ENCODE measurements at regions of chr14 and their contacts with region 1.

Region 1: GRCh38 chr14:102584871-102585869 is 7.3 kb upstream of the RCOR1 start:
- DNase-seq: peak; percentile 73 to 89
- H3K4me3 ChIP-seq: no peak overlapping the region
- H3K4me3 Mint-ChIP-seq: no peak overlapping the region
- H3K27ac Mint-ChIP-seq: peak overlapping the region; percentile 83
- H3K4me1 ChIP-seq: peaks cover 43% of the 10 kb centered on the region
- H3K4me1 Mint-ChIP-seq: peaks cover 29% of the 10 kb centered on the region
- H3K27me3 ChIP-seq: no peaks in the 10 kb centered on the region
- H3K27me3 Mint-ChIP-seq: no peaks in the 10 kb centered on the region
- CTCF ChIP-seq: no peak

Region 2: DNA sequence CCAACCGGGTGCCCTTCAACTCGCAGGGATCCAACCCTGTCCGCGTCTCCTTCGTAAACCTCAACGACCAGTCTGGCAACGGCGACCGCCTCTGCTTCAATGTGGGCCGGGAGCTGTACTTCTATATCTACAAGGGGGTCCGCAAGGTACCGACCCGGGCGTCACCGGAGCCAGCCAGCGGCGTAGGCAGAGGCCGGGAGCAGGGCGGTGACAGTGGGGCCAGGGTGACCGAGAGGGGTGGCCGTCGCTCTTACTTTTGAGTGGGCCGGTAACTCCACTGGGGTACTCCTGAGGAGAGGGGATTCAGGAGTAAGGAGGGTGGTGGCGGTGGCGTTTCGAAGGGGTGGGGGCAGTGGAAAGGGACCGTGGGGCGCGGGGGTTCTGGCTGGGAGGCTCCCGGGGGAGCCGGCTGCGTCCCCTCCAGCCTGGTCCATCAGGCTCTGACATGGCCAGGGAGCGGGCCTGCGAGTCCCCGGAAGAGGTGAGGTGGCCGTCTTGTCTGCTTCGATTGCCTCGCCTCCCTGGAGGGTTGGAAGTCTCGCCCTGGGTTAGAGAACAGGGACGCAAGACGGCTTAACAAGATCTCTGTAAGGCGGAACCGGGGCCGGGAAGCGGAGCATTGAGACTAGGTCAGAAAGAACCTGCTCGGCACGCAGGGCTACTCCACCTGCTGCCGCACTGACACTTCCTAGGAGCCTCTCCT is 445.0 kb before region 1 on chr14:
- CTCF ChIA-PET with region 1: no interaction called
- POLR2A ChIA-PET with region 1: no interaction called
- intact Hi-C with region 1: no loop called
- DNase-seq: peak in 1 of 2 experiments; percentile 49
- H3K4me3 ChIP-seq: peak overlapping the region; percentile 96
- H3K4me3 Mint-ChIP-seq: peak overlapping the region; percentile 98
- H3K27ac Mint-ChIP-seq: peak overlapping the region; percentile 91
- H3K4me1 ChIP-seq: peaks cover 6% of the 10 kb centered on the region; the same call in 1 of the 2 replicates
- H3K4me1 Mint-ChIP-seq: peaks cover 11% of the 10 kb centered on the region
- H3K27me3 ChIP-seq: no peaks in the 10 kb centered on the region
- H3K27me3 Mint-ChIP-seq: no peaks in the 10 kb centered on the region
- CTCF ChIP-seq: no peak

Region 3: GRCh38 chr14:102573591-102574046 is 11.6 kb before region 1 on chr14:
- CTCF ChIA-PET with region 1: interaction called, 10 read pairs
- POLR2A ChIA-PET with region 1: interaction called, 15 read pairs
- intact Hi-C with region 1: no loop called
- DNase-seq: no peak
- H3K4me3 ChIP-seq: no peak overlapping the region
- H3K4me3 Mint-ChIP-seq: no peak overlapping the region
- H3K27ac Mint-ChIP-seq: no peak overlapping the region
- H3K4me1 ChIP-seq: peaks cover 48% of the 10 kb centered on the region
- H3K4me1 Mint-ChIP-seq: peaks cover 16% of the 10 kb centered on the region
- H3K27me3 ChIP-seq: no peaks in the 10 kb centered on the region
- H3K27me3 Mint-ChIP-seq: no peaks in the 10 kb centered on the region
- CTCF ChIP-seq: no peak